ENCODE measurements at regions of chr4 and their contacts with region 1.

Region 1: DNA sequence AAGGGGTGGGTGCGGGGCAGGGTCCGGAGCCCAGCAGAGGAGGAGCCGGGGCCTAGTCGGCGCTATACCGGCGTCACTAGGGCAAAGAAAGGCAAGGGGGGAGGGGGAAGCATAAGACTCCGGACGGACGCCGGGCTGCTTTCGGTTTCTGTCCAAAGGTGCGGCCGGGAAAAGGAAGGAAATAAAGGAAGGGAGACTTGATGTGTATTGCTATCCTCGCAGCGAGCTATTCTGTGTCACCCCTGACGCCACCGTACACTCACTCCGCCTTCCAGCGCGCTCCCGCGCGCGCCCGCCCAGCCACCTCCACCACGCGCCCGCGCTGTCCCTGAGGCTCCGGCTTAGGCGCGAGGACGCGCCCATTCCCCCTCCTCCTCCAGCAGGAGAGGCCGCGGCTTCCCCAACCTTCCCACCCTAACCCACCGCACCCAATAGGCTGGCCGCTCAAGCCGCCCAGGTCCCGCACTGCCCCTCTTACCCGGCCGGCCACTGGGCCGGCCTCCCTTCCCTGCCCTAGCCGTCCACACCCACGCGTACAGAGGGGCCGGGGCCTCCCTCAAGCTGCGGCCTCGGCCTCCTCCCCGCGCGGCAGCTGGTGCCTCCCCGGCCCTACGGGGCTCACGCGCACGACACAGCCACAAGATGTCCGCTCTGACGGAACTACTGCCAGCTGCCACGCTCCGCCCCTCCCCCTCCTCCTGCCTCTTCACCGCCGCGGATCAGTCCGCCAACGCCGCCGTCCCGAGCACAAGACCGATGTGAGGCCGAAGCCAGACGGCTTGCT is at the start of gene UBE2D3:
- DNase-seq: peak; percentile 91 to 97 (median 95)
- H3K4me3 ChIP-seq: peak within 1 kb of the TSS; percentile 90
- H3K4me3 Mint-ChIP-seq: no peak within 1 kb of the TSS
- H3K27ac ChIP-seq: peak within 1 kb of the TSS; percentile 99
- H3K27ac Mint-ChIP-seq: no peak within 1 kb of the TSS
- H3K4me1 ChIP-seq: peaks cover 34% of the 10 kb centered on the region
- H3K4me1 Mint-ChIP-seq: peaks cover 18 to 35% (median 20%) of the 10 kb centered on the region in 3 donors
- H3K27me3 ChIP-seq: no peaks in the 10 kb centered on the region
- H3K27me3 Mint-ChIP-seq: peaks cover 0 to 5% of the 10 kb centered on the region in 2 donors
- total RNA-seq, gene UBE2D3: 436 to 452 TPM

Region 2: GRCh38 chr4:102629673-102630072 is 197.4 kb before region 1 on chr4:
- CTCF ChIA-PET with region 1: interaction called, 4 read pairs
- POLR2A ChIA-PET with region 1: interaction called, 12 read pairs
- DNase-seq: no peak
- H3K4me3 ChIP-seq: no peak overlapping the region
- H3K4me3 Mint-ChIP-seq: peak overlapping the region; percentile 7 to 75 (median 49)
- H3K27ac ChIP-seq: no peak overlapping the region
- H3K27ac Mint-ChIP-seq: peak overlapping the region; percentile 51 to 98 (median 86)
- H3K4me1 ChIP-seq: peaks cover 42% of the 10 kb centered on the region
- H3K4me1 Mint-ChIP-seq: peaks cover 57 to 72% (median 65%) of the 10 kb centered on the region in 3 donors
- H3K27me3 ChIP-seq: no peaks in the 10 kb centered on the region
- H3K27me3 Mint-ChIP-seq: no peaks in the 10 kb centered on the region

Region 3: GRCh38 chr4:102760645-102761295 is 66.3 kb before region 1 on chr4 and contains the start of gene MANBA:
- CTCF ChIA-PET with region 1: interaction called, 5 read pairs
- POLR2A ChIA-PET with region 1: interaction called, 52 read pairs
- DNase-seq: peak; percentile 77 to 88 (median 80)
- H3K4me3 ChIP-seq: peak within 1 kb of the TSS; percentile 87
- H3K4me3 Mint-ChIP-seq: peak within 1 kb of the TSS; percentile 90 to 98 (median 95)
- H3K27ac ChIP-seq: peak within 1 kb of the TSS; percentile 55
- H3K27ac Mint-ChIP-seq: peak within 1 kb of the TSS; percentile 51 to 96 (median 93)
- H3K4me1 ChIP-seq: peaks cover 19% of the 10 kb centered on the region
- H3K4me1 Mint-ChIP-seq: peaks cover 32 to 55% (median 53%) of the 10 kb centered on the region in 3 donors
- H3K27me3 ChIP-seq: no peaks in the 10 kb centered on the region
- H3K27me3 Mint-ChIP-seq: peaks cover 4 to 13% of the 10 kb centered on the region in 2 donors
- total RNA-seq, gene MANBA: 9.1 to 9.5 TPM

Region 4: DNA sequence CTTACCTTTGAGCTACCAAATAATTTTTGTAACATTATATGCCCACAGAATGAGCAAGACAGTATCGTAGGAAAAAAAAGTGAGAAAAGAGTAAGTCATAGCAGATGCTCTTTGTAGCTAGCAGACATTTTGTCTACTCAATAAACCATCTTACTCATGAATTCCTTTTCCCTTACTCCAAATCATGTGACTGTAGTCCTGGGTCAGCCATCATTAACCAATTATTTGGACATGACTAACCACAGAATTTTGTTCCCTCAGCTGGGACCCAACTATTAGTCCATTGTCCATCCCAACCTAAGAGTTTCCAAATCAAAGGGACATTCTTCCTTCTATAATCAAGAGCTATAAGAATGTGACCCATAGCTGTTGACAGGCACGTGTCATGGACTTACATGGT is 11.1 kb before region 1 on chr4:
- CTCF ChIA-PET with region 1: interaction called, 7 read pairs
- POLR2A ChIA-PET with region 1: interaction called, 26 read pairs
- DNase-seq: no peak
- H3K4me3 ChIP-seq: peak overlapping the region; percentile 2
- H3K4me3 Mint-ChIP-seq: peak overlapping the region in 6 of 7 donors; percentile 38 to 79 (median 68)
- H3K27ac ChIP-seq: no peak overlapping the region
- H3K27ac Mint-ChIP-seq: peak overlapping the region in 6 of 8 donors; percentile 54 to 90 (median 72)
- H3K4me1 ChIP-seq: peaks cover 97% of the 10 kb centered on the region
- H3K4me1 Mint-ChIP-seq: peaks cover 78 to 88% (median 80%) of the 10 kb centered on the region in 3 donors
- H3K27me3 ChIP-seq: no peaks in the 10 kb centered on the region
- H3K27me3 Mint-ChIP-seq: no peaks in the 10 kb centered on the region

Region 5: GRCh38 chr4:102868781-102869568 is 41.9 kb after region 1 on chr4 and contains the start of gene CISD2:
- CTCF ChIA-PET with region 1: interaction called, 29 read pairs
- POLR2A ChIA-PET with region 1: interaction called, 182 read pairs
- DNase-seq: peak; percentile 88 to 95 (median 93)
- H3K4me3 ChIP-seq: peak within 1 kb of the TSS; percentile 80
- H3K4me3 Mint-ChIP-seq: peak within 1 kb of the TSS; percentile 89 to 99 (median 96)
- H3K27ac ChIP-seq: peak within 1 kb of the TSS; percentile 98
- H3K27ac Mint-ChIP-seq: peak within 1 kb of the TSS; percentile 97 to 100 (median 100)
- H3K4me1 ChIP-seq: peaks cover 26% of the 10 kb centered on the region
- H3K4me1 Mint-ChIP-seq: peaks cover 56 to 83% (median 79%) of the 10 kb centered on the region in 3 donors
- H3K27me3 ChIP-seq: no peaks in the 10 kb centered on the region
- H3K27me3 Mint-ChIP-seq: no peaks in the 10 kb centered on the region
- total RNA-seq, gene CISD2: 43.6 to 43.7 TPM

Measured in CD8-positive, alpha-beta memory T cell (primary cell).